Caco-2 (cell line): ENCODE measurements at regions of chr17 and their contacts with region 1.

Region 1: DNA sequence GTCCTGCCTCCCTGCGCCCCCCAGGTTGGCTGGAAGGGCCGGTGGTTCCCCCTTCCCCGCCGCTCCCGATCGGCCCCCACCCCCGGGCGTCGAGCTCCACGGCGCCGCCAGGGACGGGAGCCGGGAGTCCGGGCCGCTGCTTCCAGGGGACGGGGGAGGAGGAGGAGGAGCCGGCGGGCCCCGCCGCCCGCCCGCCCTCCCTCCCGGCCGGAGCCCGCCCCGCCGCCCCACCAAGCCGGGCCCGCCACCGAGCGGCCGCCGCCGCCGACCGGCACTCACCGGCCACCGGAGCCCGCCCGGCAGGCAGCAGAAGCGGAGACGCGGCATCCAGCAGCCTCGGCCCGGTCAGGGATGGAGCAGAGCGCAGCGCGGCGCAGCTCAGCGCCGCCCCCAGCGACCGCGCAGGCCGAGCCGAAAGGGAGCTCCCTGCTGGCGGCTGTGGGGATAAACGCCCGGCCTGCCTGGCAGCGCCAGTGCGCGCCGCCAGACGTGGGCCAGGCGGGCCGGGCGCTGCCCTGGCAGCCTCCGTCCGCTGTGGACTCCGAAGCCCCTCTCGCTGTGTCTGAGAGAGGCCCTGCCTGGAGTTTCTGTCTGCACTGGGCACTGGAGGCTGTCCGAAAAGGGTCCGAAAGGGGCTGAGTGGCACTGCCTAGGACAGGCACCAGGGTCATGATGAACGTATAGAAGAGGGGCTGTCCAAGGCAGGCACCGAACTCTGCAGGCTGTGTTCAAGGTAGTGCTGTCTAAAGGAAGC is at the start of gene MYO18A:
- DNase-seq: peak; percentile 74 to 90
- H3K4me3 ChIP-seq: peak within 1 kb of the TSS; percentile 71
- H3K4me3 Mint-ChIP-seq: peak within 1 kb of the TSS; percentile 93
- H3K27ac Mint-ChIP-seq: peak within 1 kb of the TSS; percentile 93
- H3K4me1 ChIP-seq: peaks cover 31% of the 10 kb centered on the region
- H3K4me1 Mint-ChIP-seq: peaks cover 21% of the 10 kb centered on the region
- H3K27me3 ChIP-seq: no peaks in the 10 kb centered on the region
- H3K27me3 Mint-ChIP-seq: peaks cover 3% of the 10 kb centered on the region
- CTCF ChIP-seq: peak; percentile 94 to 95
- total RNA-seq, gene MYO18A: 47.1 and 55.5 TPM in 2 replicates

Region 2: DNA sequence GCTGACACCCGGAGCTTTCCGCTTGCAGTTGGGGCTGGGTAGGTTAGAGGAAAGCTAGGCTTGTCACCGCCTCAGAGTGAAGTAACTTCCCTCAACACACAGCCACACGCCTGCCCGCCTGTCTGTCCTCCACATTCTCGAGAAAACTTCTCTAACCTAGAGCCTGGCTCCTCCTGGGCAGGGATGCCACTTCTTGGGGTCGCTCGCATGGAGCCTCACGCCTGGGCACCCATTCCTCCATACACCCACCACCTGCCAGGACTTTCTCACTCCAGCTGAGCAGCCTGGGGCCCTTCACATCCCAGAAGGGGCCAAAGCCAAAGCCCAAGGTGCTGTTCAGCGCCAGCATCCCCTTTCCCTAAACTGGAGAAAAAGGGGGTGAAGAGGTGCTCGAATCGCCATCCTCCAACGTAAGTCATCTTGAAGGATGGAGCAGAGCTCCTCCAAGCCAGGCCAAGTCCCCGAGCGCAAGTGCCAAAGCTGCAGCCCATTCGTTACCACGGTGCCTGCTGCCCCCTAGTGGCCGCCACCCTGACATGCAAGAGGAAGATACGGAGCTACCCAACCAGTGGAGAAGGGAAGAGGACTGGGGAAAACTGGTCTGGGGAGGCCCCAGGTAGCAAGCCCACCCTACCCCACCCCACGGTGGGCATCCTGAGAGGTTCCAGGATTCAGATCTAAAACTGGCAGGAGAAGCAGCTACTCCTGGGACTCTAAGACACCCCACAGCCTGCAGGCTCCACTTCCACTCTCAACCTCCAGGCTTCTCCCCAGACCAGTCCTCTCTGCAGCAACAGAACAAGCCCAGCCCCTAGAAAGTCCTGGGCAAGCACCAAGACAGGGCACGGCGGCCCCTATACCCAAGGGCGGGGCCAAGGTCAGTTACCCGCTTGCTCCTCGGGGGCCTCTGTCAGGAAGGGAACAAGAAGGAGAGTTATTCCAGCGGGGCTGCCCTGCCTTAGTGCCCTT is 63.1 kb before region 1 on chr17:
- CTCF ChIA-PET with region 1: interaction called, 22 read pairs
- POLR2A ChIA-PET with region 1: no interaction called
- intact Hi-C with region 1: no loop called
- DNase-seq: peak; percentile 71 to 79
- H3K4me3 ChIP-seq: no peak overlapping the region
- H3K4me3 Mint-ChIP-seq: no peak overlapping the region
- H3K27ac Mint-ChIP-seq: peak overlapping the region; percentile 33
- H3K4me1 ChIP-seq: no peaks in the 10 kb centered on the region
- H3K4me1 Mint-ChIP-seq: no peaks in the 10 kb centered on the region
- H3K27me3 ChIP-seq: no peaks in the 10 kb centered on the region
- H3K27me3 Mint-ChIP-seq: no peaks in the 10 kb centered on the region
- CTCF ChIP-seq: peak; percentile 85 to 92

Region 3: GRCh38 chr17:29124117-29124924 is 55.9 kb before region 1 on chr17:
- CTCF ChIA-PET with region 1: interaction called, 42 read pairs
- POLR2A ChIA-PET with region 1: interaction called, 9 read pairs
- intact Hi-C with region 1: no loop called
- DNase-seq: peak; percentile 67 to 70
- H3K4me3 ChIP-seq: no peak overlapping the region
- H3K4me3 Mint-ChIP-seq: no peak overlapping the region
- H3K27ac Mint-ChIP-seq: no peak overlapping the region
- H3K4me1 ChIP-seq: no peaks in the 10 kb centered on the region
- H3K4me1 Mint-ChIP-seq: no peaks in the 10 kb centered on the region
- H3K27me3 ChIP-seq: no peaks in the 10 kb centered on the region
- H3K27me3 Mint-ChIP-seq: no peaks in the 10 kb centered on the region
- CTCF ChIP-seq: peak; percentile 65 to 81

Region 4: DNA sequence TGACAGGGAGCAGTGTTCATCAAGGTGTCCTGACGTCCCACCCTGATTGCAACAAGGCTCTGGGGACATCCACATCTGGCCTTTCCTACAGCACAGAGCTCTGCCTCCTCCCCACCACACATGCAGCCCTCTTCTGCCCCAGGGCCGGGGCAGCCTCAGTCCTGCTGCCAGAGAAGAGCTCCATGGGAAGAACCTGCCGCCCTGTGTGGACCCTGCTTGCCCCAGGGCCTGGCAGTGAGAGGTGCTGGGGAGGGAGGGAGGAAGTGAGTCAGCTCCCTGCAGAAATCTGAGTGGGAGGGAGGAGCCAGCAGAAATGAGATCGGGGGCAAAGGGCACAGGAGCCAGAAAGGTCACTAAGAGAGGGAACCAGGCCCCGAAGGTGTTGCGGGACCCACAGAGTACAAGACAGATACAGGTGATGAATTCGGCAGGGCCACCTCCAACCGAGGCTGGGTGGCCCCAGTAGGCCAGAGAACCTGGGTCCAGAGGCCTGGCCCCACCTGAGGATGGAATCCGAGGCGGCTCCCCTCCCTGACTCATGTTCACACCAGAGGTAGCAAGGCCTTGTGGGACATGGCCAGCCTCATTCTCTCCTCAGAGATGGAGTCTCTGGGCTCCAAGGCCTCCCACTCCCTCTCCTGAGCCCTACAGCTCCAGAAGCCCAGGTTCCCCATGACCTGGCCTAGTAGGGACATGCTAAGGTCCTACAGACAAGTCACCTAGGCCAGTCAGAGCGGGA is 24.8 kb before region 1 on chr17:
- CTCF ChIA-PET with region 1: interaction called, 449 read pairs
- POLR2A ChIA-PET with region 1: interaction called, 34 read pairs
- intact Hi-C with region 1: loop called (anchors 1 kb)
- DNase-seq: peak; percentile 82 to 92
- H3K4me3 ChIP-seq: no peak overlapping the region
- H3K4me3 Mint-ChIP-seq: peak overlapping the region; percentile 53
- H3K27ac Mint-ChIP-seq: peak overlapping the region; percentile 97
- H3K4me1 ChIP-seq: peaks cover 81% of the 10 kb centered on the region
- H3K4me1 Mint-ChIP-seq: peaks cover 42% of the 10 kb centered on the region
- H3K27me3 ChIP-seq: no peaks in the 10 kb centered on the region
- H3K27me3 Mint-ChIP-seq: no peaks in the 10 kb centered on the region
- CTCF ChIP-seq: no peak

Region 5: DNA sequence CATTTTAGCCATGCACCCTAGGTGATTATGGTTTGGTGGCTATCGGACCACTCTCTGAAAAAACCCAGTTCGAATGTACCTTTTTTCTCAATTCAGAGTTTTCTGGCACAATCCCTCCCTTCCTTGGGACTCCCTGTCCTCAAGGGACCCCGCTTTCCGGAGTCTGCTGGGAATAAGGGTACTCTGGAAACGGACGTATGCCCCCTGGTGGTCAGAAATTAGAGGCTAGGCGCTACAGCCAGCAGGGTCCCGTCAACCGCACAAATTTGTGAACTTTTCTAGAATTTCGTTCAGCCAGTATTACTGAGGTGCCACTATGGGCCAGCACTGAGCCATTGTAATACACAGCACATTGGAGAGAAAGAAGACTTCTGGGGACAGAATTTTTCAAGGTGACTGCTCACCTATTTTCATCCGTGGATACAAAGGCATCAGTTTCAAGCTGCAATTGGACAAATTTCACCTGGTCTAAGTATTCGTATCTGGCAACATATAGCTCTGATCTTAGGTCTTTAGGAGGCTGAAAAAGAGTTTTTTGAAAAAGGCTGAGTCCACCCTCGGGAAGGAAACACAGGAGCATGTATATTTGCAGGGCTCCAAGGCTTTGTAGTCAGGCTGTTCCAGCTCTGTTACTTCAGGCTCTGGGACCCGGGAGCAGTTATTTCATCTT is 39.3 kb after region 1 on chr17:
- CTCF ChIA-PET with region 1: interaction called, 19 read pairs
- POLR2A ChIA-PET with region 1: no interaction called
- intact Hi-C with region 1: loop called (anchors 5 kb)
- DNase-seq: peak; percentile 86 to 92
- H3K4me3 ChIP-seq: no peak overlapping the region
- H3K4me3 Mint-ChIP-seq: no peak overlapping the region
- H3K27ac Mint-ChIP-seq: no peak overlapping the region
- H3K4me1 ChIP-seq: peaks cover 10% of the 10 kb centered on the region; the same call in 1 of the 2 replicates
- H3K4me1 Mint-ChIP-seq: peaks cover 7% of the 10 kb centered on the region
- H3K27me3 ChIP-seq: no peaks in the 10 kb centered on the region
- H3K27me3 Mint-ChIP-seq: no peaks in the 10 kb centered on the region
- CTCF ChIP-seq: peak; percentile 91 to 97

Region 6: GRCh38 chr17:29241015-29241963 is 61.1 kb after region 1 on chr17:
- CTCF ChIA-PET with region 1: interaction called, 12 read pairs
- POLR2A ChIA-PET with region 1: no interaction called
- intact Hi-C with region 1: no loop called
- DNase-seq: peak in 1 of 2 experiments; percentile 28
- H3K4me3 ChIP-seq: no peak overlapping the region
- H3K4me3 Mint-ChIP-seq: no peak overlapping the region
- H3K27ac Mint-ChIP-seq: no peak overlapping the region
- H3K4me1 ChIP-seq: no peaks in the 10 kb centered on the region
- H3K4me1 Mint-ChIP-seq: peaks cover 7% of the 10 kb centered on the region
- H3K27me3 ChIP-seq: no peaks in the 10 kb centered on the region
- H3K27me3 Mint-ChIP-seq: no peaks in the 10 kb centered on the region
- CTCF ChIP-seq: no peak

Region 7: GRCh38 chr17:29293890-29294579 is 113.8 kb after region 1 on chr17 and contains the start of gene NUFIP2:
- CTCF ChIA-PET with region 1: interaction called, 3 read pairs
- POLR2A ChIA-PET with region 1: interaction called, 11 read pairs
- intact Hi-C with region 1: no loop called
- DNase-seq: peak; percentile 99
- H3K4me3 ChIP-seq: peak within 1 kb of the TSS; percentile 100
- H3K4me3 Mint-ChIP-seq: peak within 1 kb of the TSS; percentile 94
- H3K27ac Mint-ChIP-seq: peak within 1 kb of the TSS; percentile 96
- H3K4me1 ChIP-seq: peaks cover 11% of the 10 kb centered on the region
- H3K4me1 Mint-ChIP-seq: peaks cover 13% of the 10 kb centered on the region
- H3K27me3 ChIP-seq: no peaks in the 10 kb centered on the region
- H3K27me3 Mint-ChIP-seq: no peaks in the 10 kb centered on the region
- CTCF ChIP-seq: no peak
- total RNA-seq, gene NUFIP2: 105 and 114 TPM in 2 replicates